Aorta (tissue), 5 donors: ENCODE measurements at regions of chr6 and their contacts with region 1.

Region 1: DNA sequence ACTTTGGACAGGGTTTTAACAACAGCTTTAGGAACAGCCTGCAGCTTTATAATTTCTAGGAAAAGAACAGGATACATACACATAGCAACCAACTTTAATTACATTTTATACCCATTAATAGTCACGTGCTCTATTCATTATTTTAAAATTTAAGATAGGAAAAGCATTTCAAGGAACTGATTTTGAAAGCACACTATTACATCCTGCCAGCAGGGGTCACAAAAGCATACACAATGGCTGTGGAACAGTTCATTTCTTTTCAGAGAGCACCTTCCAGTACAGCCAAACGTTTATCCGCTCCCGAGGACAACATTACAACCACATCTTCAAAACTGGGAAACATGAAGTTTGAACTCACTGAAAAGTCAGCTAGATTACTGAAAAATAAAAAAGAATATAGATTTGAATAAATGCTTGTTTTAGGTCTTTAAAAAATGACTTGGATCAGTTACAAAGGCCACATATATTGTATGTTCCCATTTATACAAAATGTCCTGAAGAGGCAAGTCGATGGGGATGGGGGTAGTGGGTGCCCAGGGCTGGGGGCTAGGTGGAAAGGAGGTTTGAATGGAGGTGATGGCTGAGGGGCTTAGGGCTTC is 104.6 kb upstream of the EXOC2 start:
- DNase-seq: no peak
- ATAC-seq: no peak
- H3K4me3 ChIP-seq: no peak overlapping the region
- H3K27ac ChIP-seq: no peak overlapping the region
- H3K4me1 ChIP-seq: no peaks in the 10 kb centered on the region
- H3K27me3 ChIP-seq: peaks cover 0 to 2% of the 10 kb centered on the region in 2 donors

Region 2: DNA sequence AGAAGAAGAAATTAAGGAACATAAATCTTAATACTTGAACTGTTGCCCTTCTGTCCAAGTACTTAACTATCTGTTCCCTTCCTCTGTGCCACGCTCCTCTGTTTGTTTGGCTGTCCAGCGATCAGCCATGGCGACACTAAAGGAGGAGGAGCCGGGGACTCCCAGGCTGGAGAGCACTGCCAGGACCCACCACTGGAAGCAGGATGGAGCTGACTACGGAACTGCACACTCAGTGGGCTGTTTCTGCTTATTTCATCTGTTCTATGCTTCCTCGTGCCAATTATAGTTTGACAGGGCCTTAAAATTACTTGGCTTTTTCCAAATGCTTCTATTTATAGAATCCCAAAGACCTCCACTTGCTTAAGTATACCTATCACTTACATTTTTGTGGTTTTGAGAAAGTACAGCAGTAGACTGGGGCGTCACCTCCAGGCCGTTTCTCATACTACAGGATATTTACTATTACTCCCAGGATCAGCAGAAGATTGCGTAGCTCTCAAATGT is 388.9 kb before region 1 on chr6:
- intact Hi-C with region 1: no loop called
- DNase-seq: peak in 1 of 2 donors; percentile 86
- ATAC-seq: no peak
- H3K4me3 ChIP-seq: no peak overlapping the region
- H3K27ac ChIP-seq: no peak overlapping the region
- H3K4me1 ChIP-seq: no peaks in the 10 kb centered on the region
- H3K27me3 ChIP-seq: no peaks in the 10 kb centered on the region

Region 3: GRCh38 chr6:1381481-1382330 is 584.1 kb after region 1 on chr6:
- intact Hi-C with region 1: loop called (anchors 5 kb)
- DNase-seq: peak in 1 of 2 donors; percentile 84
- ATAC-seq: peak; percentile 83
- H3K4me3 ChIP-seq: no peak overlapping the region
- H3K27ac ChIP-seq: no peak overlapping the region
- H3K4me1 ChIP-seq: no peaks in the 10 kb centered on the region
- H3K27me3 ChIP-seq: no peaks in the 10 kb centered on the region

Region 4: DNA sequence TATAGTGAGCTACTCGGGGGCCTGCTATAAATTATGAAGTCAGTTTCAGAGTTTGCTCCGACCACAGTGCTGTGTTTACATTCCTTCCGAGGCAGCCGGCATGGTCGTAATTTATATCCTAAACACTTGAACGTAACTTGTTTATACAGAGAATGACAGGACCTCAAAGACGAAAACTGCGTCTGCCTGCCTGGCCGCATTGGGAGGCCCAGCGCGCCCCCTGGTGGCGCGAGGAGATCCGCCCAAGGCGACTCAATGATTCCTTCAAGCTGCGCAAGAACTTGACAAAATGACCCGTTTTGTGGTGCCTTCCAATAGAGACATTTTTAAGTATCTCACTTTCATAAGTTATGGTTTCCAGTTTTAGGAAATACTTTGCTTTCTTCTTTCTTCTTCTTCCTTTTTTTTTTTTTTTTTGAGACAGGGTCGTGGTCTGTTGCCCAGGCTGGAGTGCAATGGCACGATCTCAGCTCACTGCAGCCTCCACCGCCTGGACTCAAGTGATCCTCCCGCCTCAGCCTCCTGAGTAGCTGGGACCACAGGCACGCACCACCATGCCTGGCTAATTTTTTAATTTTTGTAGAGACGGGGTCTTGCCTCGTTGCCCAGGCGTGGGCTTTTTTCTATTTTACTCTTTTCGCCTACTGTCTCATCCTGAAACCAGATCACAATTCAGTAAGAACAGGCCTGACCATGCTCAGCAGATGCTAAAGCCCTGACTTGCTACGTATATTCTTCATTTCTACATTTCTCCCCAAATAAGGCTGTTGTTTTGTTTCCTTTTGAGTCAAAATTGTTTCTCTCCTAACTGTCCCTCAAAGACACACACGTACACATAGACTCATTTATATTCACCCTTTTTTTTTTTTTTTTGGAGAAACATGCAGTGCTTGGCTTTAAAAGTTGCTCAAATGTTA is 599.6 kb after region 1 on chr6:
- intact Hi-C with region 1: loop called (anchors 5 kb)
- DNase-seq: peak in 1 of 2 donors; percentile 88
- ATAC-seq: no peak
- H3K4me3 ChIP-seq: no peak overlapping the region
- H3K27ac ChIP-seq: no peak overlapping the region
- H3K4me1 ChIP-seq: no peaks in the 10 kb centered on the region
- H3K27me3 ChIP-seq: peaks cover 0 to 2% of the 10 kb centered on the region in 2 donors

Region 5: DNA sequence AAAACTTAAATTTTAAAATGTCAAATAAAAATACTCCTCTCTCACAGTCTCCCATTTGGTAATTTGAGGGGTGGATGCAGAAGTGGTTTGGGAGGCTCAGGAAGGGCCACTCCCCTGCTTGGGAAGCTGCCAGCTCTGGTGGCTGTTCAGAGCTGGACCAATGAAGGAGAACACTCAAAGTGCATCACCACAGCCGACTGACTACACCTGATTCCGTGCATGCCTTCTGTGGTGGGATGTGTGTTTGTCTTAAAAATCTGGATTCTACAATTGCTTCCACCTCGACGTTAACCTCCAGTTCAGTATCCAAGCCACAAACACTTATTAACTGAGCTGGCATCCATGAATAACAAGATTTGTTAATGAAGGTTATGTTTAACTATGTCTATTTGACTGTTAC is 949.4 kb after region 1 on chr6:
- intact Hi-C with region 1: no loop called
- DNase-seq: no peak
- ATAC-seq: no peak
- H3K4me3 ChIP-seq: no peak overlapping the region
- H3K27ac ChIP-seq: no peak overlapping the region
- H3K4me1 ChIP-seq: peaks cover 0 to 4% of the 10 kb centered on the region in 2 donors
- H3K27me3 ChIP-seq: no peaks in the 10 kb centered on the region